GM18951 (cell line): ENCODE measurements at regions of chr2 and their contacts with region 1.

Region 1: GRCh38 chr2:135709992-135710391 is 31.7 kb upstream of the UBXN4 start:
- POLR2A ChIP-seq: no peak

Region 2: DNA sequence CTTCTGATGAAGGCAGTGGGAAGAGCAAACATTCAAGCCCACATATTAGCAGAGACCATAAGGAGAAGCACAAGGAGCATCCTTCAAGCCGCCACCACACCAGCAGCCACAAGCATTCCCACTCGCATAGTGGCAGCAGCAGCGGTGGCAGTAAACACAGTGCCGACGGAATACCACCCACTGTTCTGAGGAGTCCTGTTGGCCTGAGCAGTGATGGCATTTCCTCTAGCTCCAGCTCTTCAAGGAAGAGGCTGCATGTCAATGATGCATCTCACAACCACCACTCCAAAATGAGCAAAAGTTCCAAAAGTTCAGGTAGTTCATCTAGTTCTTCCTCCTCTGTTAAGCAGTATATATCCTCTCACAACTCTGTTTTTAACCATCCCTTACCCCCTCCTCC is 755.9 kb before region 1 on chr2:
- in situ Hi-C with region 1: no loop called
- POLR2A ChIP-seq: no peak

Region 3: GRCh38 chr2:134999521-134999920 is 710.5 kb before region 1 on chr2:
- in situ Hi-C with region 1: loop called (anchors 10 kb)
- POLR2A ChIP-seq: no peak